GM18951 (cell line): ENCODE measurements at regions of chr6 and their contacts with region 1.

Region 1: GRCh38 chr6:166775180-166776081 is 148.4 kb upstream of the RPS6KA2 start:
- POLR2A ChIP-seq: no peak

Region 2: GRCh38 chr6:166540631-166541331 is 234.7 kb before region 1 on chr6:
- in situ Hi-C with region 1: no loop called
- POLR2A ChIP-seq: peak; percentile 14

Region 3: GRCh38 chr6:166999145-166999883 is 223.9 kb after region 1 on chr6 and contains the start of gene CEP43:
- in situ Hi-C with region 1: loop called (anchors 10 kb)
- POLR2A ChIP-seq: peak; percentile 71

Region 4: GRCh38 chr6:167504385-167504961 is 729.0 kb after region 1 on chr6:
- in situ Hi-C with region 1: no loop called
- POLR2A ChIP-seq: no peak